ACHN (cell line): ENCODE measurements at regions of chr12 and their contacts with region 1.

Region 1: DNA sequence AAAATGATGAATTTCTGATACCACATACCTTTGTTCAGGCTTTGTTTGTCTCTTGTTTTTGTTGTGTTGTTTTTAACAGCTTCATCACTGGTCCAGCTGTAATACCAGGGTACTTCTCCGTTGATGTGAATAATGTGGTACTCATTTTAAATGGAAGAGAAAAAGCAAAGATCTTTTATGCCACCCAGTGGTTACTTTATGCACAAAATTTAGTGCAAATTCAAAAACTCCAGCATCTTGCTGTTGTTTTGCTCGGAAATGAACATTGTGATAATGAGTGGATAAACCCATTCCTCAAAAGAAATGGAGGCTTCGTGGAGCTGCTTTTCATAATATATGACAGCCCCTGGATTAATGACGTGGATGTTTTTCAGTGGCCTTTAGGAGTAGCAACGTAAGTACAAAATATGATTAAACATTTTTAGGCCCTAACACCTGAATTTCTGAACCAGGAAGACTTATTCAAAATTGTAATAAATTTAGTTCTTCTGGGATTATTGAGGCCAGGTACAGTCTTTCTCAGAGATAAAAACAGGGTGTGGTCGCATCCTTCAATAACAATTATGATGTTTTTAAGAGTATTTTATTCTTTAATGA is 22.4 kb downstream of the RXYLT1 start:
- DNase-seq: peak; percentile 65

Region 2: GRCh38 chr12:63753744-63754143 is 48.4 kb before region 1 on chr12:
- in situ Hi-C with region 1: no loop called
- DNase-seq: no peak

Region 3: GRCh38 chr12:63857771-63858670 is 55.9 kb after region 1 on chr12:
- in situ Hi-C with region 1: no loop called
- DNase-seq: no peak

Region 4: GRCh38 chr12:64256166-64256800 is 454.2 kb after region 1 on chr12:
- in situ Hi-C with region 1: loop called (anchors 25 kb)
- DNase-seq: peak; percentile 81